Astrocyte of the cerebellum (primary cell): ENCODE measurements at regions of chr3 and their contacts with region 1.

Region 1: DNA sequence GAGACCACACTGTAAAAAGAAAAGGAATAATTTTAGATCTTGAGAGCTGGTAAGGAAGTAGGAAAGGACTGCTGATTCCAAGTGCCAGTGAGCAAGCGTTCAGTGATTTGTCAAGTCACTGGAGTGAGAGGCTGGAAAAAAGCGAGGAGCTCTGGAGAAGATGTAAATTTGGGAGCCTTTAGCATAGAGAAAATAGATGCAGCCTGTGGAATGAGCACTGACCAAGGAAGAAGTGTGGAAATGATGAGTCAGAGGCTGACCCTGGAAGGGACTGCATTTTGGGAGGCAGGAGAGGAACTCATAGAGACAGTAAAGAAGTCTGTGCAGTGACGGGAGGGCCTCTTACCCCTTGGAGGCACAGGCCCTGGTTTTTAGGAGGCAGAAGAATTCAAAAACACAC is 17.1 kb upstream of the ABTB1 start:
- DNase-seq: peak; percentile 19
- H3K4me3 ChIP-seq: no peak overlapping the region
- CTCF ChIP-seq: no peak

Region 2: DNA sequence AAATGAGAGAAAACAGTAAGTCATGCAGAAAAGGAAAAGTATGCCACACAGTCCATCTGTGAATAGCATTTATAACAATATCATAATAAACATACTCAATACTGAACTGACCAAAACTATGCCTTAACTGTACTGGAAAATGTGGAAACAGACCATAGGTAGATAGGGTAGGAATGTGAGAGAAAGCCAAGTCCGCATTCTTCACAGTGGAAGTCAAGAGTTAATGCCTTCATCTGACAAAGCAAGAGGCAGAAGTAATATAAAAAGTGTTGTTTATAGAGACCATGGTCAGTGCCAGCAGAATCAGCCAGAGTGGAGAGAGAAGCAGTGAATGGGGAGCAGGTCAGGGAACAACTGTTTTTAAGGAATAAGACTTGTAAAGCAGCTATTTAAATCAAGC is 311.7 kb after region 1 on chr3:
- in situ Hi-C with region 1: loop called (anchors 5 kb)
- DNase-seq: peak; percentile 92
- H3K4me3 ChIP-seq: no peak overlapping the region
- CTCF ChIP-seq: no peak